Activated CD4-positive, alpha-beta memory T cell treated with anti-CD3 and anti-CD28 coated beads for 36 hours (primary cell): ENCODE measurements at regions of chr1 and their contacts with region 1.

Region 1: GRCh38 chr1:27609210-27609555 is 5.2 kb upstream of the AHDC1 start:
- DNase-seq: no peak
- H3K4me3 Mint-ChIP-seq: no peak overlapping the region
- H3K27ac Mint-ChIP-seq: no peak overlapping the region
- H3K4me1 Mint-ChIP-seq: peaks cover 15% of the 10 kb centered on the region
- H3K27me3 Mint-ChIP-seq: no peaks in the 10 kb centered on the region

Region 2: GRCh38 chr1:27632387-27633297 is 23.5 kb after region 1 on chr1:
- CTCF ChIA-PET with region 1: interaction called, 9 read pairs
- POLR2A ChIA-PET with region 1: interaction called, 3 read pairs
- intact Hi-C with region 1: loop called (anchors 2 kb)
- DNase-seq: peak; percentile 80
- H3K4me3 Mint-ChIP-seq: peak overlapping the region; percentile 24
- H3K27ac Mint-ChIP-seq: peak overlapping the region; percentile 74
- H3K4me1 Mint-ChIP-seq: peaks cover 69% of the 10 kb centered on the region
- H3K27me3 Mint-ChIP-seq: no peaks in the 10 kb centered on the region

Region 3: DNA sequence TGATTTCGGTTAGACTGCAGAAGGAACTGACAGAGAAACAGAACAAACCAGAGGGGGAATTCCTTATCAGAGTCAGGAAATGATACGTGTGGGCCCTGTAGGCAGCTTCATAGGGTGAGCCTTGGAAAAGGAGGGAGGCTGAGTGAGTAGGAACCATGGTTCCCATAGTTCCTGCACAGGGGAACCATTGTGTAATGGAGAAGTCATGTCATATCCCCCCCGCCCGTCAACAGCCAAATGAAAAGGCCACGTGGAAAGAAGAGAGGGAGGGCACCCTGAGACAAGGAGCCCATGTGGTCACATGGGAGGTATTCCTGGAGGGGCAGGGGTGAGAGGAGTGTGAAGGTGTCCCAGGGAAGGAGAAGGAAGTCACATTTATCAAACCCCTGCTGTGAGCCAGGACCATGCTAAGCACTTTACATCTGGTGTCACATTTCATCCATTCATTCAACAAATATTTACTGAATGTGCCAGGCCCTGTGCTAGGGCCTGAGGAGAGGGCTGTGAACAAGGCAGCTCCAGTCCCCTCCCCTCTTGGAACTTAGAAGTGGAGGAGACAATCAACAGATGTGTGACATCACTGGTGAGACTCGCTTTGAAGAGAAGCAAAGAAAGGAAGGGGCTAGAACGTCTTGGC is 41.5 kb after region 1 on chr1:
- CTCF ChIA-PET with region 1: interaction called, 17 read pairs
- POLR2A ChIA-PET with region 1: no interaction called
- intact Hi-C with region 1: no loop called
- DNase-seq: no peak
- H3K4me3 Mint-ChIP-seq: no peak overlapping the region
- H3K27ac Mint-ChIP-seq: peak overlapping the region; percentile 8
- H3K4me1 Mint-ChIP-seq: peaks cover 11% of the 10 kb centered on the region
- H3K27me3 Mint-ChIP-seq: no peaks in the 10 kb centered on the region